MCF 10A (cell line): ENCODE measurements at regions of chr1 and their contacts with region 1.

Region 1: DNA sequence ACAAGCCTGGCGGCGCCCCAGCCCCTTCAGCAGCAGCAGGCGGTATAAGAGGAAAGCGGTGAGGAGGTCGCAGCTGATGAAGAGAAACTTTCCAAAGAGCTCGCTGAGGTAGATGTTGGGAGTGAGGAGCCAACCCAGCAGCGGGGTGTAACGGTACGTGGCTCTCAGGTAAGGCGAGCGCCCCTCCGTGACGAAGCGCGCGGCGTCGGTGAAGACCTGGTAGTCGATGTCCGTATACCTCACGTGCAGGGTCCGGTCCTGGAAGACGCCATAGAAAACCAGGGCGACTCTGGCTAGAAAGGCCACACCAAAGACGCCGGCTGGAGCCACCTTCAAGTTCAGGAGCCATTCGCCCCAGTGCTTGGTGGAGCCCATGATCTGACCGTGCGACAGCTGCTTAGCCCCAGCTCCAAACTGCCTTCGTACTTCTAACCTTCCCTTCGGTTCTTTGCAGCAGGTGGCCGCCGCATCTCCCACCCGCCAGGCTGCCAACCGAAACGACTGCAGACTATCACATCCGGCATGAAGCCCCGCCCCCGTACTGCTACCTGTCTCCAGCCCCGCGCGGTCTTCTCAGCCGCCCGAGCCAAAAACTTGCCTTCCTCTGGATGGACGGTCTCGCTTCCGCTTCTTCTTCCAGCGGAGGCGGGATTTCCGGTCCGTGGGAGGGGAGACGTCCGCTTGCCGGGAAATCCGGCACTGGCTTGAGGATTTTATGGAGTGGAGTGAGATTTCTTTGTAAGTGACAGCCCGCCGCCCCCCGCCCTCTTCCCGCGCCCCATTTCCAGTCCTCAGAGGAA is at the start of gene PIGM:
- DNase-seq: peak; percentile 99
- H3K4me3 Mint-ChIP-seq: peak within 1 kb of the TSS; percentile 80
- H3K27ac Mint-ChIP-seq: peak within 1 kb of the TSS; percentile 60
- H3K4me1 Mint-ChIP-seq: peaks cover 24% of the 10 kb centered on the region
- H3K27me3 Mint-ChIP-seq: no peaks in the 10 kb centered on the region
- CTCF ChIP-seq: no peak
- total RNA-seq, gene PIGM: 7.7 and 10.1 TPM in 2 replicates

Region 2: DNA sequence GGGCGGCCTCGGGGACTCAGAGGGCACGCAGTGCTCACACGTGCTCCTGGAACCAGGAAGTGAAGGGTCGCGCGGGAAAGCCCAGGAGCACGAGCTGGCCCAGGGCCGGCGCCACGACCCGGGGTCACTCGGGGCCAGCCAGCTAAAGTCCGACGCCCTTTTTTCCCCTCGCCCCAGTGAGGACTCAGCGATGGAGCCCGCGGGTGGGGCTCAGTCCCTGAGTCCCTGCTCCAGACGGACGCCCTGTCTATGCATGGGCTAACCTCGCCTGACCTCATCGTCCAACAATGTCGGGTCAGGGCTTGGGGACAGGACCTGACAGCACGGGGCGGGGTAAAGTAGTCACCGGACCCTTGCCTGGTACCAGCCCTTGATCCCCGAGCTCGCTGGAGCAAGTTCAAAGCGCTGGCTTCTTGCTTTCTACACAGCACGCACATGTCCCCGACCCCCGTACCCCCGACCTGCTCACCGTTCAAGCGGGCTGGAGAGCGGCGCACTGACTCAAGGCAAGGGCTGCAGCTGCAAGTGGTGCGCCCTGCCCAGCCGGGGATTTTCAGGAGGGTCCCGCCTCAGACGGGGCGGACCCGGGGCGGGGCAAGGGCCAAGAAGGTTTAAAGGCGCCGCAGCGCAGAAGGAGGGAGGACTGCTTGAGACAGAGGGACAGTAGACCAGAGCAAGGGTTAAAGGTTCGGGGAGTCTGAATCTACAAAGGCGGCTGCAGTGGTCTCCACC is 106.4 kb before region 1 on chr1 and contains the start of gene TAGLN2:
- CTCF ChIA-PET with region 1: interaction called, 9 read pairs
- POLR2A ChIA-PET with region 1: interaction called, 62 read pairs
- intact Hi-C with region 1: no loop called
- DNase-seq: peak; percentile 97
- H3K4me3 Mint-ChIP-seq: peak within 1 kb of the TSS; percentile 81
- H3K27ac Mint-ChIP-seq: peak within 1 kb of the TSS; percentile 99
- H3K4me1 Mint-ChIP-seq: peaks cover 44% of the 10 kb centered on the region
- H3K27me3 Mint-ChIP-seq: no peaks in the 10 kb centered on the region
- CTCF ChIP-seq: no peak
- total RNA-seq, gene TAGLN2: 464 and 483 TPM in 2 replicates

Region 3: DNA sequence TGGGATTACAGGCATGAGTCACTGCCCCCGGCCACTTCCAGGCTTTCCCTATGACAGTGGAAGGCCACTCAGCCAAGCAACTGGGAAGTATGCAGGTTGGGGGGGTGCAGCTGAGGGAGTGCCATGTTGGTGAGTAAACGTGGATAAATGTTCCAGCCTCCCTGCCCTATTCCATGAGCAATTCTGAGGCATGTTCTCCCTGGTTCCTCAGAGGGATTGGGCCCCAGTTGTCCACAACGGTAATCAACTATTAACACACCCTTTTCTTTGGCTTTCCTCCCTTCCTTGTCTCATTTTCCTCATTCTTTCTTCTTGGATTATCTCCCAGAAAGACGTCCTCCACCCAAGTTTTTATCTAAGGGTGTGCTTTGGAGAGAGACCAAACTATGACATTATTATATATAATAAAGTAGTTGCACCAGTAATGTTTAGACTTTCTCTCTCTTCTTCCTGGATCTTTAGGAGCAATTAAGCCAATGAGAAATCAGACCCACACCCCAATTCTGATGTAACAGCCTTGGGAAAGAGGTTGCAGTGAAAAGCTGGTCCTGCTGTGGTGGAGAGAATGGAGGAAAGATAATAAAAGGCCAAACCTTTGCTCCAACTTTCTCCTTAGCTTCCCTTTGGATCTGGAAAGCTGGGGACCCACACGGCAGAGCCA is 70.7 kb before region 1 on chr1:
- CTCF ChIA-PET with region 1: interaction called, 3 read pairs
- POLR2A ChIA-PET with region 1: interaction called, 6 read pairs
- intact Hi-C with region 1: loop called (anchors 2 kb)
- DNase-seq: peak; percentile 71
- H3K4me3 Mint-ChIP-seq: peak overlapping the region; percentile 73
- H3K27ac Mint-ChIP-seq: peak overlapping the region; percentile 75
- H3K4me1 Mint-ChIP-seq: peaks cover 49% of the 10 kb centered on the region
- H3K27me3 Mint-ChIP-seq: no peaks in the 10 kb centered on the region
- CTCF ChIP-seq: no peak

Region 4: DNA sequence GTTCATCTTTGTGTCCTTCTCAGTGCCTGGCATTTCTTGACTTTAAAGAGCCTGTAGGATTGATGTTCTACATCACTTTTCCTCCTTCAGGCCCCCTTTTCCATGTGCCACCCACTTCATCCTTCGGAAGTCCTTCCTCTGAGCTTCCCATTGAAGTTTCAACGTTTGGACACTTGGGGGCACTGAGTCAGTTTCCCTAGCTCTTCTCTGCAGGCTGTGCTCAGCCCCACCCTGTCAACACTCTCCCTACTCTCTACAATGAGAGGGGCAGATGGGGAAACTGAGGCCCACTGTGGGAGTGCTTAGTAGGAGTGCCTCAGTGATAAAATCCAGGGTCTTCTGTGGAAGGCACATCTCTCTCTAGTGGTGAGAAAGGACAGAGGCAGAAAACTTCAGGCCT is 26.5 kb after region 1 on chr1:
- CTCF ChIA-PET with region 1: interaction called, 1,546 read pairs
- POLR2A ChIA-PET with region 1: interaction called, 12 read pairs
- intact Hi-C with region 1: no loop called
- DNase-seq: peak; percentile 32
- H3K4me3 Mint-ChIP-seq: no peak overlapping the region
- H3K27ac Mint-ChIP-seq: no peak overlapping the region
- H3K4me1 Mint-ChIP-seq: peaks cover 12% of the 10 kb centered on the region
- H3K27me3 Mint-ChIP-seq: peaks cover 63% of the 10 kb centered on the region
- CTCF ChIP-seq: no peak

Region 5: GRCh38 chr1:160085686-160086455 is 54.3 kb after region 1 on chr1:
- CTCF ChIA-PET with region 1: interaction called, 1,546 read pairs
- POLR2A ChIA-PET with region 1: interaction called, 4 read pairs
- intact Hi-C with region 1: no loop called
- DNase-seq: peak; percentile 82
- H3K4me3 Mint-ChIP-seq: no peak overlapping the region
- H3K27ac Mint-ChIP-seq: no peak overlapping the region
- H3K4me1 Mint-ChIP-seq: peaks cover 5% of the 10 kb centered on the region
- H3K27me3 Mint-ChIP-seq: peaks cover 24% of the 10 kb centered on the region
- CTCF ChIP-seq: peak; percentile 96

Region 6: DNA sequence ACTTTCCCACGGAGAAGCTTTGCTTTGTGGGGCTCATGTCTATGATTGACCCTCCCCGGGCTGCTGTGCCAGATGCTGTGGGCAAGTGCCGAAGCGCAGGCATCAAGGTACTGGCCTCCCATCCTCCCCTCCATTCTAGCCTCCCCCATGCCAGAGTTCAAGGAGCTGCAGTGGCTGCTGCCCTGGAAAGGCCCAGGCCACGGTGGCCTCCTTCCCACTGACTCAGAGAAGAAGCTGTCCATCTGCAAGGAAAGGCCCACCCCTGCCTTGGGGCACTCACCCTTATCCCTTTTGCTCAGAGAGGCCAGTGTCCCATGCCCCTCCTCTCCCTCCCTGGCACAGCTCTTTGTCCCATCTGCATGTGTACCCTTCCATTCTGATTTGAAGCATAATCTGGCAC is 98.9 kb after region 1 on chr1:
- CTCF ChIA-PET with region 1: no interaction called
- POLR2A ChIA-PET with region 1: no interaction called
- intact Hi-C with region 1: no loop called
- DNase-seq: no peak
- H3K4me3 Mint-ChIP-seq: no peak overlapping the region
- H3K27ac Mint-ChIP-seq: no peak overlapping the region
- H3K4me1 Mint-ChIP-seq: peaks cover 29% of the 10 kb centered on the region
- H3K27me3 Mint-ChIP-seq: peaks cover 12% of the 10 kb centered on the region
- CTCF ChIP-seq: no peak